Activated naive CD4-positive, alpha-beta T cell treated with anti-CD3 and anti-CD28 coated beads for 36 hours (primary cell): ENCODE measurements at regions of chr1 and their contacts with region 1.

Region 1: GRCh38 chr1:160951443-160952128 is 3.0 kb downstream of the ITLN2 start:
- DNase-seq: peak; percentile 85
- H3K4me3 Mint-ChIP-seq: no peak overlapping the region
- H3K27ac Mint-ChIP-seq: no peak overlapping the region
- H3K4me1 Mint-ChIP-seq: peaks cover 3% of the 10 kb centered on the region
- H3K27me3 Mint-ChIP-seq: no peaks in the 10 kb centered on the region

Region 2: GRCh38 chr1:160629286-160630210 is 322.0 kb before region 1 on chr1:
- CTCF ChIA-PET with region 1: no interaction called
- intact Hi-C with region 1: loop called (anchors 5 kb)
- DNase-seq: peak; percentile 91
- H3K4me3 Mint-ChIP-seq: peak overlapping the region; percentile 66
- H3K27ac Mint-ChIP-seq: peak overlapping the region; percentile 96
- H3K4me1 Mint-ChIP-seq: peaks cover 95% of the 10 kb centered on the region
- H3K27me3 Mint-ChIP-seq: no peaks in the 10 kb centered on the region

Region 3: GRCh38 chr1:160768295-160768657 is 183.3 kb before region 1 on chr1:
- CTCF ChIA-PET with region 1: interaction called, 79 read pairs
- intact Hi-C with region 1: no loop called
- DNase-seq: peak; percentile 96
- H3K4me3 Mint-ChIP-seq: peak overlapping the region; percentile 79
- H3K27ac Mint-ChIP-seq: peak overlapping the region; percentile 99
- H3K4me1 Mint-ChIP-seq: peaks cover 68% of the 10 kb centered on the region
- H3K27me3 Mint-ChIP-seq: no peaks in the 10 kb centered on the region

Region 4: DNA sequence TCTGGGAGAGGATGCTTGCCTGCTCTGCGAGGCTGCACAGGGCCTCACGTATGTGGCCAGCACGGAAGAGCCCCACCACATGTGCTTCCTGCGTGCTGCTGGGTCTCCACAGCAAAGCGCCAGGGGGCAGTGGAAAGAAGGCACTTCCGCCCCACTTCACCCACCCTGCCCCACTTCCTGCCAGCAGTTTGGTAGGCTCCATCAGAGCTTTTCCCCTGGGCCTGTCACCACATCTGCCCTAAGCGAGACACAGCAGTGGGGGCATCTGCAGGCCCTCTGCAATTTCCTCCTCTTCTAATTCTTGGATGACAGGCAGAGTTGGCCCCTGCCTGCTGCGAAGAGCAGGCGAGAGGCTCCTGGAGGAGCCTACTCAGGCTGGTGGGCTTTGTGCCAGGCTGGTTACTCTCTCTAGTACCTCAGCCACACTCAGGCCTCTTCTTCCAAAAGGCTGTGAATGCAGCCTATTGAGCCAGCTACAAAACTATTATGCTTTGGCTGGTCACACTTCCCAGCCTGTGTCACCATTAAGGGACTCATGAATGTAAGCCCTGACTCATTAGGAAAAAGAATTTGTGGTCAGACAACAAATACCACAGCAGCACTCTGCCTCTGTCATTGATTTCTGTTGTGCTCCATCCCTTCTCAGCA is 113.9 kb before region 1 on chr1:
- CTCF ChIA-PET with region 1: interaction called, 229 read pairs
- intact Hi-C with region 1: loop called (anchors 1 kb)
- DNase-seq: peak; percentile 90
- H3K4me3 Mint-ChIP-seq: peak overlapping the region; percentile 16
- H3K27ac Mint-ChIP-seq: peak overlapping the region; percentile 82
- H3K4me1 Mint-ChIP-seq: peaks cover 49% of the 10 kb centered on the region
- H3K27me3 Mint-ChIP-seq: no peaks in the 10 kb centered on the region

Region 5: GRCh38 chr1:160884579-160884978 is 67.0 kb before region 1 on chr1:
- CTCF ChIA-PET with region 1: interaction called, 10 read pairs
- intact Hi-C with region 1: no loop called
- DNase-seq: no peak
- H3K4me3 Mint-ChIP-seq: no peak overlapping the region
- H3K27ac Mint-ChIP-seq: no peak overlapping the region
- H3K4me1 Mint-ChIP-seq: no peaks in the 10 kb centered on the region
- H3K27me3 Mint-ChIP-seq: no peaks in the 10 kb centered on the region

Region 6: DNA sequence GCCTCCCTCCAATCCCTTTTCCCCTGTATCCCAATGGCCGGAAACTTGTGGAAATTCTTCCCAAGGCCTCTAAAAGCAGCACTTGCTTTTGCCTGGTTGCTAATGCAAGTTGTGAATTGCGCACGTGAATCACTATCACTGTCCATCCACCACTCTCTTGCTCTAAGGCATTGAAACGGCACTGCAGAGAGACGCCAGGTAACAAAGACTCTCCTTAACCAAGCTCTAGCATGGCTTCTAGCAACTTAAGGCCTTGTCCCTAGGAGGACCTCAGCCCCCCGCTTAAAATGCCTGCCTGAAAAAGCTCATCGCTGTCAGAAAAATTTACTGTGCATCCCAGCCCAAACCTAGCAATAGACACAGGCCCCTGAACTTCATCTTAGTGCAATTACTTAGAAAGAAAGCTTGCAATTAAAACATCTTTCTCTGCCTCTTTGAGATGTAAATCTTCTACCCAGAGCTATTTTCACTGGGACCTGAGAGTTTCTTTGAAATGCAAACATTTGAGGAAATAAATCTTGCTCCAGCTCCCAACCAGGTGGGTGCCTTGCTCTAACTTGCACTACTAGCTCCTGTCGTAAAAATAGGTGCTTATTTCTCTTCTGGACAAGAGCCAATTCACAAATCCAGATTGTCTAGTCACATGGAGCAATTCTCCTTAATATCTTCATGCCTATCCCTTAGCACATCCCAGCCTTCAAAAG is 35.9 kb after region 1 on chr1:
- CTCF ChIA-PET with region 1: interaction called, 16 read pairs
- intact Hi-C with region 1: loop called (anchors 1 kb)
- DNase-seq: no peak
- H3K4me3 Mint-ChIP-seq: no peak overlapping the region
- H3K27ac Mint-ChIP-seq: no peak overlapping the region
- H3K4me1 Mint-ChIP-seq: no peaks in the 10 kb centered on the region
- H3K27me3 Mint-ChIP-seq: peaks cover 5% of the 10 kb centered on the region